GM18951 (cell line): ENCODE measurements at regions of chr12 and their contacts with region 1.

Region 1: GRCh38 chr12:53746592-53747092 is 5.1 kb downstream of the CISTR start:
- POLR2A ChIP-seq: no peak

Region 2: GRCh38 chr12:53543539-53543938 is 203.1 kb before region 1 on chr12:
- in situ Hi-C with region 1: loop called (anchors 10 kb)
- POLR2A ChIP-seq: no peak

Region 3: DNA sequence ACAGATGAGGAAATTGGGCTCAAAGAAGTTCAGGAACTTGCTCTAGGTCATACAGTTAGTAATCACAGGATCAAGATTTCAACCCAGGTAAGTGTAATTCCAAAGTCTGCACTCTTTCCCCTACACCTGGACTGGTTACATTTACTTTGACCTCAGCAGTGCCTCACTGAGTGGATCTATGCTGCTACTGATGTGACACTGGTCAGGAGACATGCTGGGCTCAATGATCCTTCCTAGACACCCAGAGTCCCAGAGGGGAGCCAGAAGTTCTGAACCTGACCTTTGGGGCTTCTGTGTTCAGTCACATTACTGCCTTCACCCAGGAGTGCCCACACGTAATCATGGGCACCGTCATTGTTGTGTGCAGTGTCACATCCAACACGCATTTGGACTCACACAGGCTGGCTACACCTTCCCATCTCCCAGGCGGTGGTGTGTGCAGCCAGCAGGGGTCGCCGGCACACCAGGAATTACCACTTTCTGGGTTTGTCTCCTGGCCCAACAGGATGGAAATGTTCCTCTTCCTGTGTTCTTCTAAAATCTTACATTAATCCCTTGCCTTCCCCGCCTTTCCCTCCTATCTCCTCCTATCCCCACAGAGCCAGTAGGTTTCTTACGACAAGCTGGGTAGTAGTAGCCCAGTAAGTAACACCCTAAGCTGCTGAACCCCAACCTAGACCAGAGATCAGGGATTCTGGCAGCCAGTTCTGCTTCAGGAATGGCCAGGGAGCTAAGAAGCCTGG is 45.0 kb before region 1 on chr12:
- in situ Hi-C with region 1: loop called (anchors 5 kb)
- POLR2A ChIP-seq: no peak